ENCODE measurements at regions of chr7 and their contacts with region 1.

Region 1: GRCh38 chr7:100132697-100133151 is 6.0 kb downstream of the MBLAC1 start:
- DNase-seq: peak; percentile 78
- ATAC-seq: peak; percentile 81
- H3K4me3 Mint-ChIP-seq: no peak overlapping the region
- H3K27ac Mint-ChIP-seq: no peak overlapping the region
- H3K4me1 Mint-ChIP-seq: peaks cover 30% of the 10 kb centered on the region
- H3K27me3 Mint-ChIP-seq: no peaks in the 10 kb centered on the region

Region 2: GRCh38 chr7:99990460-99990852 is 142.3 kb before region 1 on chr7:
- CTCF ChIA-PET with region 1: interaction called, 34 read pairs
- DNase-seq: no peak
- ATAC-seq: peak; percentile 7
- H3K4me3 Mint-ChIP-seq: no peak overlapping the region
- H3K27ac Mint-ChIP-seq: no peak overlapping the region
- H3K4me1 Mint-ChIP-seq: peaks cover 12% of the 10 kb centered on the region
- H3K27me3 Mint-ChIP-seq: peaks cover 21% of the 10 kb centered on the region

Region 3: GRCh38 chr7:100044701-100045100 is 88.0 kb before region 1 on chr7:
- CTCF ChIA-PET with region 1: no interaction called
- DNase-seq: no peak
- ATAC-seq: no peak
- H3K4me3 Mint-ChIP-seq: no peak overlapping the region
- H3K27ac Mint-ChIP-seq: no peak overlapping the region
- H3K4me1 Mint-ChIP-seq: peaks cover 31% of the 10 kb centered on the region
- H3K27me3 Mint-ChIP-seq: no peaks in the 10 kb centered on the region

Region 4: GRCh38 chr7:100119062-100119700 is 13.5 kb before region 1 on chr7 and contains the starts of genes CNPY4 and TAF6:
- CTCF ChIA-PET with region 1: interaction called, 26 read pairs
- DNase-seq: peak; percentile 96
- ATAC-seq: peak; percentile 80
- H3K4me3 Mint-ChIP-seq: peak within 1 kb of the TSS; percentile 93
- H3K27ac Mint-ChIP-seq: peak within 1 kb of the TSS; percentile 91
- H3K4me1 Mint-ChIP-seq: peaks cover 25% of the 10 kb centered on the region
- H3K27me3 Mint-ChIP-seq: no peaks in the 10 kb centered on the region
- total RNA-seq, gene CNPY4: 27.3 to 28.0 TPM
- total RNA-seq, gene TAF6: 70.4 to 71.4 TPM

Region 5: DNA sequence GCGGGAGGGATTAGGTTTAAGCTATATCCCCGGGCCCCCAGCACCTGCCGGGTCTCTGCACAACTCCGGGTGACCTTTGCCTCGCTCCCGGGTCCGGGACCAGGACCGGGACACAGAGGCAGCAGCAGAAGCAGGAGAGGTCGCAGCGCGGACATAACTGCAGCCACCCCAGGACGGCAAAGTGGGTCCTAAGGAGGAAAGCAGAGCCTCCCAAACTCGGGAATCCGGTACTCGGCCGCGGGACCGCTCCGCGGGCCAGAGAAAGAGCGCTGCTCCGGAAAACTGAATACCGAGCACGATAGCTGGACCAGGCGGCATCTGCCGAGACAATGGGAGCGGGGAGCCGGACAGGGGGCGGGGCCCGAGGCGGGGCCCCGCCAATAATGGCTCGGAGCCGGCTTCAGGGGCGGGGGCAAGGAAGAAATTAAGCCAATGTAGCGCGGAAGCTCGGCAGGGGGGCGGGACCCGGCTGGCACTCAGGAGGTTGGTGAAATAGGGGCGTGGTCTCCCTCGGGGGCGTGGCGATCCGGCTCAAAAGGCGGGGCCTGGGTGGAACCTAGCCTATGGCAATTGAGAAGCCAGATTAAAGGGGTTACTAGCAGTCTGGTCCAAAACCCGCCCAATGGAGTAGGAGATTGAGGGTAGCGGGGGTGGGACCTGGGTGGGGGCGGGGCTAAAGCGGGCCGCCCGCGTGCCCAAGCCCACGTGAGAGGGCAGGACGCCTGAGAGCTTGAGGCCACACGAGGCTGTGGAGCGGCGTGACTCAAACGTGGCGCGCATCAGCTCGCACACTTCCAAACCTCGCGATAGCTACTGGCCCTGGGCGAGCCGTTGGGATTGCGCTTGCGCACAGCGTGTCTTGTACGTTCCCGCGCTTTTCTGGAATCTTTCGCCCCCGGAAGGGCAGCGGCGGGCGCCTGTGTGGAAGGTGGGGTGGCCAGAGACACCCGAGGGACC is 44.6 kb after region 1 on chr7 and contains the starts of genes GPC2 and STAG3:
- CTCF ChIA-PET with region 1: interaction called, 10 read pairs
- DNase-seq: peak; percentile 98
- ATAC-seq: peak; percentile 93
- H3K4me3 Mint-ChIP-seq: peak within 1 kb of the TSS; percentile 67
- H3K27ac Mint-ChIP-seq: peak within 1 kb of the TSS; percentile 37
- H3K4me1 Mint-ChIP-seq: peaks cover 33% of the 10 kb centered on the region
- H3K27me3 Mint-ChIP-seq: peaks cover 26% of the 10 kb centered on the region
- total RNA-seq, gene GPC2: 2.9 to 6.2 TPM
- total RNA-seq, gene STAG3: 8.1 to 20.2 TPM

Region 6: DNA sequence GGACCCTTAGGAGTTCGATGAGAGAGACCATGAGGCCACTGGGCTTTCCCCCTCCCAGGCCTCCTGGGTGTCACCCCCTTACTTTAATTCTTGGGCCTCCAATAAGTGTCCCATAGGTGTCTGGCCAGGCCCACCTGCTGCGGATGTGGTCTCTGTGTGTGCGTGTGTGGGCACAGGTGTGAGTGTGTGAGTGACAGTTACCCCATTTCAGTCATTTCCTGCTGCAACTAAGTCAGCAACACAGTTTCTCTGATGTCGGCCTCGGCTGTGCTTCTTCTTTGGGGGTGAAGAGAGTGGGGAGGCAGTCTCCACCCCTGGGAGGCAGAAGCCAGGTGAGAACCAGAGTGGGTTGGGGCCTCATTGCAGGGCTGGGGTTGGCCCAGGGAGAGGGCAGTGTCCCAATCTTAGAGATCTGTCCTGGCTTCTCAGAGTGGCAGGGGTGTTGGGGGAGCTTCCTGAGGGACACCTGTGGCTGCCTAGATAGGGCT is 88.6 kb after region 1 on chr7:
- CTCF ChIA-PET with region 1: interaction called, 51 read pairs
- DNase-seq: peak; percentile 92
- ATAC-seq: peak; percentile 48
- H3K4me3 Mint-ChIP-seq: peak overlapping the region; percentile 98
- H3K27ac Mint-ChIP-seq: peak overlapping the region; percentile 100
- H3K4me1 Mint-ChIP-seq: peaks cover 58% of the 10 kb centered on the region
- H3K27me3 Mint-ChIP-seq: no peaks in the 10 kb centered on the region

Measured in activated CD8-positive, alpha-beta memory T cell treated with anti-CD3 and anti-CD28 coated beads, Interleukin-2, amount 10 ng/mL, durations not matched to agents 7 days and 5 days (primary cell).